CD4-positive, alpha-beta T cell (primary cell): ENCODE measurements at regions of chr3 and their contacts with region 1.

Region 1: DNA sequence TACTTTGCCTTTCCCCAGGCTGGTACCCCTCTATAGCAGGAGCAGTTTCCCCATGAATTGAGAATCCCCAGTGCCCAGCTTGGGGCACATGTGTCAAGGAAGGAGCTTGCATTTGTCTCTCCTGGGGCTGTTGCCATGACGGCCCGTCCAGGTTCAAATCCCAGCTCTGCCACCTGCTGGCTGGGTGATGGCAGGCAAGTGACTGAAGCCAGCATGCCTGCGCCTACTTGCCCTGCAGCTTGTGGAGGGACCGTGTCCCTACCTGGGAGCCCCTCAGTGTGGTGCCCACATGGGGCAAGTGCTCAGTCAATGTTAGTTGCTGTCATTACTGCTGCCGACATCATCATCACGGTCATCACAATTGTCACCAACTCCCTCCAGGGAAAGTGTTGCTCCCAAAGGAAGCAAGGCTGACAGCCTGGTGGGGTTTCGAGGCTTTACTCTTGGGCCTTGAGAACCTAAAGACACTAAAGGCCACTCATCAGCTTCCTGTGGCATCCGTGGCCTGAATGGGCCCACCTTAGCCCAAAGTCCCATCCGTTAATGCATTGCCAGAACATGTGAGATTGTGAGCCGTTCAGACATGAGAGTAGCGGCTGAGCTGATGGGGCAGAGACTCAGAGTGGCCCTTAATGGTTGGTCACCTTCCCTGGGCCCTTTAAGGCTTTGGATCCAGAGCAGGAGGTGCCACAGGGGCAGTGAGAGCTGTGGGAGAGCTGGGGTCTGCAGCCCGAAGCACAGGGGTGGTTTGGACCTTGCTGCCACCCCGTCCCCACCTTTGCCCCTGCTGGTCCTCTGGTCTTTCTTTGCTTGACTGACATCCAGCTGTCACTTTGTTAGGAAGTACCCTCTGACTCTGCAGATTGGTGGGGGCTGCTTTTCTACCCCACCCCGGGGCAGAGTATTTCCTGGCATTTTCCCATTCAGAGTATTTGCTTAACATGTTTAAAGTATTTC is 144.3 kb downstream of the DNAJB8 start:
- DNase-seq: peak; percentile 47 to 81 (median 68)
- ATAC-seq: peak; percentile 76
- H3K4me3 ChIP-seq: no peak overlapping the region
- H3K4me3 Mint-ChIP-seq: no peak overlapping the region
- H3K27ac ChIP-seq: no peak overlapping the region
- H3K27ac Mint-ChIP-seq: peak overlapping the region; percentile 78
- H3K4me1 ChIP-seq: peaks cover 64% of the 10 kb centered on the region
- H3K4me1 Mint-ChIP-seq: peaks cover 75% of the 10 kb centered on the region
- H3K27me3 ChIP-seq: no peaks in the 10 kb centered on the region
- H3K27me3 Mint-ChIP-seq: no peaks in the 10 kb centered on the region
- CTCF ChIP-seq: peak; percentile 64

Region 2: DNA sequence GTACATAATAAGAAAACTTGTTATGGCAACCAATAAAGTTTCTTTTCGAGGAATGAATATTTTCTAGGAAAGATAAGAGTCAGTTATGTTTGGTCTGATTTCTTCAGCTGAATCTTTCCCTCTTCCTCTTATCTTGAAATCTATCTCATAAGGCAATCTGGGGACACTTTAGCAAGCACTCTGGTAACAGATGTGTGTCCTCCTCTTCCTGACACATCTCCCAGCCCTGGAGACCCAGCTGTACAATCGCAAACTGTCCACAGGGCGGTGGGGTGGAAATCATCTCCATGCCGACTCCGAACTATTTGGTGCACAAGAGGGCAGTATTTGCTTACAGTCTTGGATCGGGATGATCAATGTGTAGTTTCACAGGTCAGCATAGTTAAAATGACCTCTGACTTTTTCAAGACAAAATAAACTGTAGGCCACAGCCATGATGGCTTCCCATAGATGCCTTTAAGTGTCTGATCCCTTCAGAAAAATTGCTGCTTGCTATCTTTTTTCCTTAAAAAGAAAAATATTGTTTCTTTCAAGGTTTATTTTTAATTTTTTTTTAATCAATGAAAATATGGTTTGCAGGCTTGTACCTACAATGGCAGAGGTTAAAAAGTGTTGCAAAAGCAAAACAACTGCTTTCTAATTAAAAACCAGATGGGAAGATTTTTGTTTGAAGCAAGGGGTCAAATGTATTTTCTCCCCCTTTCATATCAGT is 151.4 kb before region 1 on chr3:
- CTCF ChIA-PET with region 1: no interaction called
- POLR2A ChIA-PET with region 1: no interaction called
- intact Hi-C with region 1: loop called (anchors 5 kb)
- DNase-seq: peak in 3 of 14 experiments; percentile 13 to 40 (median 35)
- ATAC-seq: no peak
- H3K4me3 ChIP-seq: no peak overlapping the region
- H3K4me3 Mint-ChIP-seq: no peak overlapping the region
- H3K27ac ChIP-seq: no peak overlapping the region
- H3K27ac Mint-ChIP-seq: no peak overlapping the region
- H3K4me1 ChIP-seq: peaks cover 14% of the 10 kb centered on the region
- H3K4me1 Mint-ChIP-seq: peaks cover 41% of the 10 kb centered on the region
- H3K27me3 ChIP-seq: no peaks in the 10 kb centered on the region
- H3K27me3 Mint-ChIP-seq: no peaks in the 10 kb centered on the region
- CTCF ChIP-seq: peak; percentile 24

Region 3: DNA sequence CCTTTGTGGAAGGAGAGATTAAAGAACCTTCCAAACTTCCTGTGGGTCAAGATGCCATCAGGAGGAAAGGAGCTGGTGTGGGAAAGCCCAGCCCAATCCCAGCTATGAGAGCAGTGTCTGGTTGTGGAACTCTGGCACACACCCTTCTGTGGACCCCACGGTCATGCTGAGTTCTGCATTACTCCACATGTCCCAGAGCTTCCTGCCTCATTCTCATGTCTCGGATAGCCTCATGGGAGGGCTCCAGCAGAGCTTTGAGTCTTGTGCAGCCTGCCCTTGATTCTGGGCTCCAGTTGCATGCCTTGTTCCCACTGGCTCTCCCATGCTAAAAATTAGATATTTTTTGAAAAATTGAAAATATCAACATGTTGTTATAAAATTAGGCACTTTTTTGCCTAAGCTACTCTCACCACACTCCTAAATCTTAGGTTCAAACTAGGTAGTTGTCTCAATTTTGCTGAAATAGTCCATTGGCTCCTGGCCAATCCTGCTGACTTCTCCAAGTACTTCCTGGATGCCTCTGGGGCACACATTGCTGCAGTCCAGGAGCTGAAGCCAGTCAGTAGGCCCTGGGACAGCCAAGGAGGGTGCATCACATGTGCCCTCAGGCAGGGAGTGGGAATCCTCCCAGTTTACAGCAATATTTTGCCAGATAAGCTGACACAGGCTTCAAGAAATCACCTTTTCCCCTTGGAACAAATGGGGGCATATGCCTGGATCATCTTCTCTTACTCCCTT is 24.8 kb before region 1 on chr3:
- CTCF ChIA-PET with region 1: no interaction called
- POLR2A ChIA-PET with region 1: interaction called, 12 read pairs
- intact Hi-C with region 1: no loop called
- DNase-seq: no peak
- ATAC-seq: no peak
- H3K4me3 ChIP-seq: no peak overlapping the region
- H3K4me3 Mint-ChIP-seq: peak overlapping the region; percentile 46
- H3K27ac ChIP-seq: no peak overlapping the region
- H3K27ac Mint-ChIP-seq: peak overlapping the region; percentile 50
- H3K4me1 ChIP-seq: peaks cover 43% of the 10 kb centered on the region
- H3K4me1 Mint-ChIP-seq: peaks cover 73% of the 10 kb centered on the region
- H3K27me3 ChIP-seq: no peaks in the 10 kb centered on the region
- H3K27me3 Mint-ChIP-seq: no peaks in the 10 kb centered on the region
- CTCF ChIP-seq: no peak

Region 4: GRCh38 chr3:128497387-128498126 is 175.2 kb after region 1 on chr3:
- CTCF ChIA-PET with region 1: no interaction called
- POLR2A ChIA-PET with region 1: no interaction called
- intact Hi-C with region 1: loop called in 1 of 2 experiments (anchors 5 kb)
- DNase-seq: peak; percentile 48 to 81 (median 59)
- ATAC-seq: peak; percentile 76
- H3K4me3 ChIP-seq: peak overlapping the region; percentile 52
- H3K4me3 Mint-ChIP-seq: peak overlapping the region; percentile 84
- H3K27ac ChIP-seq: no peak overlapping the region
- H3K27ac Mint-ChIP-seq: no peak overlapping the region
- H3K4me1 ChIP-seq: peaks cover 19% of the 10 kb centered on the region
- H3K4me1 Mint-ChIP-seq: peaks cover 10% of the 10 kb centered on the region
- H3K27me3 ChIP-seq: peaks cover 43 to 61% of the 10 kb centered on the region in 2 experiments
- H3K27me3 Mint-ChIP-seq: peaks cover 78% of the 10 kb centered on the region
- CTCF ChIP-seq: peak; percentile 38